ENCODE measurements at regions of chr7 and their contacts with region 1.

Region 1: DNA sequence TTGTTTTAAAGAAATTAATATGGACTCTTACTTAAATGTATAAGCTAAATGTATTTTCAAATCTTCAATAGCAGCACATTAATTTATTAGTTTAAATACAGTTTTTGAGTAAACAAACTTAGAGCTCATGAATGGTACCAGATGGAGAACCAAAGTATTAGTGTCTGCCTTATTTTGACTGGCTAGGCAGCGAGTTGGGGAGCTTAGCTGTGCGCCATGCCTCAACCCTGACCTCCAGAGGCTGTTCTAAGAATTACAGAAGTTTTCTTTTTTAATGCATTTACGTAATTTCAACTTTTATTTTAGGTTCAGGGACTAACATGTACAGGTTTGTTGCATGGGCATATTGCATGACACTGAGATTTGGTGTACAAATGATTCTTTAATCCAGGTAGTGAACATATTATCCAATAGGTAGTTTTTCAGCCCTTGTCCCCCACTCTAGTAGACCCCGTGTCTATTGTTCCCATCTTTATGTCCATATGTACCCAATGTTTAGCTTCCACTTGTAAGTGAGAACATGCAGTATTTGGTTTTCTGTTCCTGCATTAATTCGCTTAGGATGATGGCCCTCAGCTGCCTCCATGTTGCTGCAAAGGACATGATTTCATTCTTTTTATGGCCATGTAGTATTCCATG is 166.8 kb downstream of the IQUB start:
- DNase-seq: peak; percentile 24
- H3K4me3 Mint-ChIP-seq: no peak overlapping the region
- H3K27ac Mint-ChIP-seq: no peak overlapping the region
- H3K4me1 Mint-ChIP-seq: no peaks in the 10 kb centered on the region
- H3K27me3 Mint-ChIP-seq: no peaks in the 10 kb centered on the region
- CTCF ChIP-seq: peak; percentile 66

Region 2: DNA sequence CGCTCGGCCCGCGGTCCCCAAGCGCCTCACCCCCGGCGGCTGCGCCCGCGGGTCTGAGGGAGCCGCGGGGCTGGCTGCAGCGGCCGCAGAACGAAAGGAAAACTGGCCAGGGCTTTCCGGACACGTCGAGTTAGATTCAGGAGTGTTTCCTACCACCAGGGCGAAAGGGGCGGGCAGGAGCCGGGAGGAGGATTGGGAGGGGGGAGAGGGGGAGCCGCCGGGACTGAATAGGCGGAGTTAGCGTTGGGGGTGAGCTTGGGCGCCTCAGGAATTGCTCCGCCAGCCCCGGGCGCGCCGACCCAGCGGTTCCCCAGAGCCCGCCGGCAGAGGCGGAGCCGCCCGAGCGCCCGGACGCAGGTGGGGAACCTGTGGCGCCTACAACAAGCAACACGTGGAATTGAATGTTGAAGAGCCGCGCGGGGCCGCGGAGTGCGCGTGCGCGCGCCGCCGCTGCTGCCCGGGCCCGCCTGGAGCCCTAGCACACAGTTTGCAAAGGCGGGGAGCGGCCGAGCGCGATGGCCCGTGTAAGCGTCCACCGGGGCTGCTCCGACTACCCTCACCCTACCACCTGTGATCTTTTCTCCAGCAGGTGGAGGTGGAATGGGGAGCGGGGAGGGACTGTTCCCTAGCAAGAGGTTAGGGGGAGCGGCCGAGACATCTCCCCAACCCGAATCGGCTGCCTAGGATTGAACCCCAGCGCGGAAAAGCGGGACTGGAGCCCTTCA is 481.1 kb before region 1 on chr7 and contains the start of gene CADPS2:
- CTCF ChIA-PET with region 1: no interaction called
- intact Hi-C with region 1: loop called (anchors 2 kb)
- DNase-seq: peak; percentile 91
- H3K4me3 Mint-ChIP-seq: peak within 1 kb of the TSS; percentile 95
- H3K27ac Mint-ChIP-seq: peak within 1 kb of the TSS; percentile 81
- H3K4me1 Mint-ChIP-seq: peaks cover 18% of the 10 kb centered on the region
- H3K27me3 Mint-ChIP-seq: no peaks in the 10 kb centered on the region
- CTCF ChIP-seq: no peak
- total RNA-seq, gene CADPS2: 14.1 and 16.4 TPM in 2 replicates

Region 3: DNA sequence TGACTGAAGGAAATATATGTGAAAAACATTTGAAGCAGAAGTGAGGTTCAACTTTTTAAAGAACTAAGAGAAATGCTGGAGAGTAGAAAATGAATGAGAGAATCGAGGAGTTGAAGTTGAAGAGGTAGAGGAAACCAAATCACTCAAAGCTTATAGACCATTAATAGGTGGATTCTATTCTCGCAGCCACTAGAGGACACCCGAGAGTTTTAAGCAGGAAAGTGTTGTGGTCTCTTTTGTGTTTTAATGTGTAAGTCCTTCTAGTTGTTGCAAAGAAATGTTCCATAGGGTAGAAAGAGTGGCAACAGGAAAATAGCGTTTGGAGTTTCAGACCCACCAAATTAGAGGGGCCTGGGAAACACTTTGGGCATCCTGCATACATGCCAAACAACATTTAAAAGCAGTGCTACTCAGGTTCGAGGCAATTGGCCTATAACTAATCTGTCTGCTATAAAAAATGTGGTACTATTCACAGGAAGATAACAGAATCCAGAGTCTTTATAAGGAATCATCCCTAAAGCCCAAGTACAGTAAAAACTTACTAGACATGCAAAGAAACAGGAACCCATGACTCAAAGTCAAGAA is 296.8 kb before region 1 on chr7:
- CTCF ChIA-PET with region 1: interaction called, 4 read pairs
- intact Hi-C with region 1: loop called (anchors 2 kb)
- DNase-seq: peak; percentile 18
- H3K4me3 Mint-ChIP-seq: no peak overlapping the region
- H3K27ac Mint-ChIP-seq: no peak overlapping the region
- H3K4me1 Mint-ChIP-seq: no peaks in the 10 kb centered on the region
- H3K27me3 Mint-ChIP-seq: no peaks in the 10 kb centered on the region
- CTCF ChIP-seq: no peak

Region 4: GRCh38 chr7:123208793-123209192 is 158.8 kb before region 1 on chr7:
- CTCF ChIA-PET with region 1: interaction called, 28 read pairs
- intact Hi-C with region 1: loop called (anchors 1 kb)
- DNase-seq: no peak
- H3K4me3 Mint-ChIP-seq: no peak overlapping the region
- H3K27ac Mint-ChIP-seq: no peak overlapping the region
- H3K4me1 Mint-ChIP-seq: peaks cover 39% of the 10 kb centered on the region
- H3K27me3 Mint-ChIP-seq: no peaks in the 10 kb centered on the region
- CTCF ChIP-seq: peak; percentile 45

Region 5: GRCh38 chr7:124399941-124400340 is 1032.3 kb after region 1 on chr7:
- CTCF ChIA-PET with region 1: no interaction called
- intact Hi-C with region 1: no loop called
- DNase-seq: no peak
- H3K4me3 Mint-ChIP-seq: no peak overlapping the region
- H3K27ac Mint-ChIP-seq: peak overlapping the region; percentile 10
- H3K4me1 Mint-ChIP-seq: peaks cover 15% of the 10 kb centered on the region
- H3K27me3 Mint-ChIP-seq: no peaks in the 10 kb centered on the region
- CTCF ChIP-seq: no peak

Measured in Calu3 (cell line).